T-cell (primary cell): ENCODE measurements at regions of chr21 and their contacts with region 1.

Region 1: GRCh38 chr21:46507562-46507961 is 48.9 kb downstream of the DIP2A start:
- DNase-seq: no peak
- ATAC-seq: no peak
- H3K4me3 ChIP-seq: no peak overlapping the region
- H3K4me3 Mint-ChIP-seq: no peak overlapping the region
- H3K27ac ChIP-seq: no peak overlapping the region
- H3K27ac Mint-ChIP-seq: no peak overlapping the region
- H3K4me1 ChIP-seq: peaks cover 0 to 8% of the 10 kb centered on the region in 2 experiments
- H3K4me1 Mint-ChIP-seq: peaks cover 6 to 23% (median 8%) of the 10 kb centered on the region in 3 donors
- H3K27me3 ChIP-seq: no peaks in the 10 kb centered on the region
- H3K27me3 Mint-ChIP-seq: no peaks in the 10 kb centered on the region

Region 2: DNA sequence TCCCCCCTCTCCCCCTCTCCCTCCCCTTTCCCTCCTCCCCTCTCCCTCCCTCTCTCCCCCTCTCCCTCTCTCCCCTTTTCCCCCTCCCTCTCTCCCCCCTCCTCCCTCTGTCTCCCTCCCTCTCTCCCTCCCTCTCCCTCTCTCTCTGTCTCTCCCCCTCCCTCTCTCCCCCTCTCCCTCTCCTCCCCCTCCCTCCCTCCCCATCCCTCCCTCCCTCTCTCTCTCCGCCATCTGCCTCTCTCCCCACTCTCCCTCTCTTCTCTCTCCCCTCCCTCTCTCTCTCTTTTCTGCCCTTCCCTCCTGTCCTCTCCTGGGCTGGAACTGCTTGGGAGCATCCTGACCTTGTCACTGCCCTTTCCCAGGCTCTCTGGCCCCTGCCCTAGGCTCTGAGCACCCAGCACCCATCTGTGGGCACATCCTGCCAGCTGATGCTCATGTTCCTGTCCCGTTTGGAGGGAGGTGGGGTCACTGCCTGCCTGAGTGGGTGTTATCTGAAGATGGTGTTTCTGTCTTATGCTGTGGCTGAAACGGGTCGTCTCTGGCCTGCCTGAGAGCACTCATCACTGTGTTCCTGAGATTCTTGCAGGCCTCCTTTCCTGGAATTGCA is 363.0 kb before region 1 on chr21:
- CTCF ChIA-PET with region 1: no interaction called
- POLR2A ChIA-PET with region 1: no interaction called
- DNase-seq: no peak
- ATAC-seq: no peak
- H3K4me3 ChIP-seq: no peak overlapping the region
- H3K4me3 Mint-ChIP-seq: peak overlapping the region in 1 of 3 donors; percentile 78
- H3K27ac ChIP-seq: no peak overlapping the region
- H3K27ac Mint-ChIP-seq: peak overlapping the region; percentile 43 to 44
- H3K4me1 ChIP-seq: peaks cover 0 to 4% of the 10 kb centered on the region in 2 experiments
- H3K4me1 Mint-ChIP-seq: peaks cover 7 to 12% (median 8%) of the 10 kb centered on the region in 3 donors
- H3K27me3 ChIP-seq: peaks cover 0 to 10% of the 10 kb centered on the region in 2 experiments
- H3K27me3 Mint-ChIP-seq: peaks cover 0 to 4% of the 10 kb centered on the region in 2 donors

Region 3: GRCh38 chr21:46532080-46532479 is 24.5 kb after region 1 on chr21:
- CTCF ChIA-PET with region 1: interaction called in 1 of 2 experiments, 10 read pairs
- POLR2A ChIA-PET with region 1: no interaction called
- DNase-seq: peak in 33 of 35 experiments; percentile 8 to 72 (median 36)
- ATAC-seq: peak; percentile 76 to 96 (median 93)
- H3K4me3 ChIP-seq: no peak overlapping the region
- H3K4me3 Mint-ChIP-seq: peak overlapping the region in 2 of 3 donors; percentile 18 to 23
- H3K27ac ChIP-seq: no peak overlapping the region
- H3K27ac Mint-ChIP-seq: peak overlapping the region; percentile 91 to 95
- H3K4me1 ChIP-seq: peaks cover 8 to 16% of the 10 kb centered on the region in 2 experiments
- H3K4me1 Mint-ChIP-seq: peaks cover 45 to 50% (median 47%) of the 10 kb centered on the region in 3 donors
- H3K27me3 ChIP-seq: no peaks in the 10 kb centered on the region
- H3K27me3 Mint-ChIP-seq: no peaks in the 10 kb centered on the region